WTC11 (cell line): ENCODE measurements at regions of chr13 and their contacts with region 1.

Region 1: GRCh38 chr13:52128714-52129700 is at the start of gene NEK5:
- DNase-seq: peak; percentile 92
- ATAC-seq: peak; percentile 89
- H3K4me3 Mint-ChIP-seq: peak within 1 kb of the TSS; percentile 82
- H3K27ac Mint-ChIP-seq: peak within 1 kb of the TSS; percentile 12; the same call in 1 of the 2 replicates
- H3K4me1 Mint-ChIP-seq: peaks cover 10% of the 10 kb centered on the region
- H3K27me3 Mint-ChIP-seq: peaks cover 7% of the 10 kb centered on the region; the same call in 1 of the 2 replicates
- CTCF ChIP-seq: peak; percentile 51
- total RNA-seq, gene NEK5: 0.55 to 0.76 TPM (median 0.73 TPM) in 3 replicates

Region 2: GRCh38 chr13:51844862-51845573 is 284.0 kb before region 1 on chr13 and contains the start of gene TMEM272:
- CTCF ChIA-PET with region 1: interaction called, 12 read pairs
- POLR2A ChIA-PET with region 1: no interaction called
- DNase-seq: peak; percentile 81
- ATAC-seq: peak; percentile 73
- H3K4me3 Mint-ChIP-seq: no peak within 1 kb of the TSS
- H3K27ac Mint-ChIP-seq: no peak within 1 kb of the TSS
- H3K4me1 Mint-ChIP-seq: peaks cover 4% of the 10 kb centered on the region; the same call in 1 of the 2 replicates
- H3K27me3 Mint-ChIP-seq: no peaks in the 10 kb centered on the region; the same call in 1 of the 2 replicates
- CTCF ChIP-seq: peak; percentile 89
- total RNA-seq, gene TMEM272: 0.09 to 0.21 TPM in 2 of 3 replicates, not detected in the other

Region 3: GRCh38 chr13:51911860-51912510 is 217.0 kb before region 1 on chr13:
- CTCF ChIA-PET with region 1: interaction called, 14 read pairs
- POLR2A ChIA-PET with region 1: no interaction called
- DNase-seq: no peak
- ATAC-seq: no peak
- H3K4me3 Mint-ChIP-seq: no peak overlapping the region
- H3K27ac Mint-ChIP-seq: no peak overlapping the region
- H3K4me1 Mint-ChIP-seq: peaks cover 13% of the 10 kb centered on the region
- H3K27me3 Mint-ChIP-seq: peaks cover 11% of the 10 kb centered on the region
- CTCF ChIP-seq: no peak

Region 4: DNA sequence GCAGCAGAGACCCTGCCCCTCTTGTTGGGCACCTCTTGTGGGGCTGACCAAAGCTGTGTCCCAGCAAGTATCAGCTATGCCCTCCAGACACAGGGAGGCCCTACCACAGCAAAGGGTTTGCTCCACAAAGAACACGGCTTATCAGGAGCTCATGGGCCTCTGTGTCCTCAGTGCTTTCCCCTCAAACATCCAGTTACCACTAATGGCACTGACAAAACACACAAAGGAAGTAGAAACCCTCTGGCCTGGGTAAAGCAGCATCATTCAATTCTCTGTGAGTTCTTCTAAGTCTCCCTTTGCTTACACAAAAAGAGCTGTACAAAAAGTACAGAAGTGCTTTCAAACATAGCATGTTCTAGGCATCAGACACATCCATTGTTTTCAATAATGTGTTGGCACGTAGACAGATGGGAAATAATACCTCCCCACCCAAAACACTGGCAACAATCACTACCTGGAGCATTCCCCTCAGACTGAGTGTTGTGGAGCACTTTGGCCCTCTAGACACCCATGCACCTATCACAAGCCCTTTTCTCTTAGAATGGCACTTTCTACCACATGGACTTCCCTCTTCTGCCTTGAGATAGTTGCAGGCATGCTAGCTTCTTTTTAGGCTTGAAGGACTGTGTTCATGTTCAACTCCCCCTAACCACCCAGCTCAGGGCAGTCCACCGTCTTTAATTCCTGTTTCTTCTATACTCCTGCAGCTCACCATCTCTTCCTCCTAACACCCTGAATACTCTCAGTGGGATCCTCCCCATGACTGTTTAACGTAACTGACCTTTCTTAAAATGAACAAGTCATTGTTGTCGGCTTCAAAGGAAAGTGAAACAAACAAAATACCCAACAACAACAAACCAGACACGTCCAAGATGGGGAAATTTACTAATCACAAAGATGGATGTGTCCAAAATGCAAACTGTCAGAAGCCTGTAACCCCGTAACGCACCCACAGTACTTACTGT is 161.2 kb before region 1 on chr13:
- CTCF ChIA-PET with region 1: interaction called, 16 read pairs
- POLR2A ChIA-PET with region 1: no interaction called
- DNase-seq: no peak
- ATAC-seq: no peak
- H3K4me3 Mint-ChIP-seq: no peak overlapping the region
- H3K27ac Mint-ChIP-seq: no peak overlapping the region; the same call in 1 of the 2 replicates
- H3K4me1 Mint-ChIP-seq: no peaks in the 10 kb centered on the region
- H3K27me3 Mint-ChIP-seq: no peaks in the 10 kb centered on the region
- CTCF ChIP-seq: no peak

Region 5: DNA sequence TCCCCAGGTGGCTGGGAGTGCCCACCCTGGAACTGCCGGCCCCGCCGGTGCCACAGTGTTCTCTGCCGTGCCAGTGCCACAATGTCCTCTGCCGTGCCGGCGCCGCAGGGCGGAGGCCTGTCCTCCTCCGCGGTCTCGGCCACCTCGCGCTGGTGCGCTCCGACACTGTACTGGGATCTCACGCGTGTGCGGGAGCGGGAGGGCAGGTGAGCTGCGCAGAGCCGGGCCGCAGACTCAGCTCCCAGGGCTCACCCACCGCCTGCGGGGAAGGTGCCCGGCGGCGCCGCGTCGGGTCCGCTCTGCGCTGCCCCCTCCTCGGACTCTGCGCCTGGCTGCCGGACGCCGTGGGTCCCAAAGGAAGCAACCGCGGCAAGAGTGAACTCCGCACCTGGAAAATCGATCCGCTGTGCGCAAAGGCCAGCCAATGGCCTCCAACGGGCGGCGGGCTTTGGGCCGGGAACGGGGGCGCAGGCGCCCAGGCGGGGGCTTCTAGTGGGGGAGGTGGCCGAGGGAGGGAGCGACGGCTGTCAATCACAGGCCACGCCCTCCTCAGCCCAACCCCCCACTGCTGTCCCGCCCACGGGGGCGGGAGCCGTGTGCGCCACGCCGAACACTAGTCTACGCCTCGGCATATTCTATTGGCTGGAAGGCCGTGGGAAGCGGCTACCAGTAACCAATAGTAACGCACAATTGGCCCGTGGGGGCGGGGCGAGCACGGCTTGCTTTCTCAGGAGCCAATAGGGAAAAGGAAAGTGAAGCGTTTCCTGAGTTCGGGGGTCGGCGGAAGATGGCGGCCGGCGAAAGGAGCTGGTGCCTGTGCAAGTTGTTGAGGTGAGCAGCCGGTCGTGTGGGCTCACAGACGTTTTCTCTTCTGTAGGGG is 117.1 kb before region 1 on chr13 and contains the start of gene ALG11:
- CTCF ChIA-PET with region 1: interaction called, 14 read pairs
- POLR2A ChIA-PET with region 1: no interaction called
- DNase-seq: peak; percentile 100
- ATAC-seq: peak; percentile 96
- H3K4me3 Mint-ChIP-seq: peak within 1 kb of the TSS; percentile 96
- H3K27ac Mint-ChIP-seq: peak within 1 kb of the TSS; percentile 94
- H3K4me1 Mint-ChIP-seq: peaks cover 24% of the 10 kb centered on the region
- H3K27me3 Mint-ChIP-seq: peaks cover 26% of the 10 kb centered on the region
- CTCF ChIP-seq: no peak
- total RNA-seq, gene ALG11: 35.9 to 40.6 TPM (median 38.9 TPM) in 3 replicates

Region 6: DNA sequence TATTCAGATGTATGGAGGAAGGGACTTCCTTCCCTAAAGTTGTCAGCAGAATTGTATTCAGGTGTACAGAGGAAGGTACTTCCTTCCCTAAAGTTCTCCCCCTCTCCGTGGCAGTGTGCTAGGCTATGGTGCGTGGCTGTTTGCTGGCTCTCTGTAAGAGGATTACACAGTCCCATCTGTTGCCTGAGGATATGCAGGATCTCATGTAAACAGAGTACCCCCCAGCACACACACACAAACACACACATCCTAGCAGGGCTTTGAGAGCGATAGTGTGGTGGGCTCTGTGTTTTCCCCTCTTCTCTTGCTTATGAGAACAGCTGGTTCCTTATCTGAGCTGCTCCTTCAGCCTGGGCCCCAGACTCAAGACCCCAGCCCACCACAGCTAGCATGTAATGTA is 10.4 kb before region 1 on chr13:
- CTCF ChIA-PET with region 1: interaction called, 11 read pairs
- POLR2A ChIA-PET with region 1: no interaction called
- DNase-seq: no peak
- ATAC-seq: peak; percentile 48
- H3K4me3 Mint-ChIP-seq: no peak overlapping the region
- H3K27ac Mint-ChIP-seq: no peak overlapping the region
- H3K4me1 Mint-ChIP-seq: peaks cover 2% of the 10 kb centered on the region; the same call in 1 of the 2 replicates
- H3K27me3 Mint-ChIP-seq: no peaks in the 10 kb centered on the region; the same call in 1 of the 2 replicates
- CTCF ChIP-seq: no peak